ENCODE measurements at regions of chr11 and their contacts with region 1.

Region 1: GRCh38 chr11:112074026-112074811 is at the start of gene NKAPD1:
- DNase-seq: peak; percentile 69
- H3K4me3 ChIP-seq: peak within 1 kb of the TSS; percentile 97
- H3K27ac ChIP-seq: peak within 1 kb of the TSS; percentile 98
- H3K27me3 ChIP-seq: no peaks in the 10 kb centered on the region
- CTCF ChIP-seq: peak; percentile 19; the same call in 1 of the 2 replicates
- polyA plus RNA-seq, gene NKAPD1: 18.2 and 23.2 TPM in 2 replicates

Region 2: GRCh38 chr11:112025707-112026106 is 48.5 kb before region 1 on chr11:
- CTCF ChIA-PET with region 1: no interaction called
- POLR2A ChIA-PET with region 1: interaction called, 12 read pairs
- DNase-seq: no peak
- H3K4me3 ChIP-seq: peak overlapping the region; percentile 88
- H3K27ac ChIP-seq: no peak overlapping the region
- H3K27me3 ChIP-seq: no peaks in the 10 kb centered on the region
- CTCF ChIP-seq: no peak